K562 (cell line): ENCODE measurements at regions of chr17 and their contacts with region 1.

Region 1: DNA sequence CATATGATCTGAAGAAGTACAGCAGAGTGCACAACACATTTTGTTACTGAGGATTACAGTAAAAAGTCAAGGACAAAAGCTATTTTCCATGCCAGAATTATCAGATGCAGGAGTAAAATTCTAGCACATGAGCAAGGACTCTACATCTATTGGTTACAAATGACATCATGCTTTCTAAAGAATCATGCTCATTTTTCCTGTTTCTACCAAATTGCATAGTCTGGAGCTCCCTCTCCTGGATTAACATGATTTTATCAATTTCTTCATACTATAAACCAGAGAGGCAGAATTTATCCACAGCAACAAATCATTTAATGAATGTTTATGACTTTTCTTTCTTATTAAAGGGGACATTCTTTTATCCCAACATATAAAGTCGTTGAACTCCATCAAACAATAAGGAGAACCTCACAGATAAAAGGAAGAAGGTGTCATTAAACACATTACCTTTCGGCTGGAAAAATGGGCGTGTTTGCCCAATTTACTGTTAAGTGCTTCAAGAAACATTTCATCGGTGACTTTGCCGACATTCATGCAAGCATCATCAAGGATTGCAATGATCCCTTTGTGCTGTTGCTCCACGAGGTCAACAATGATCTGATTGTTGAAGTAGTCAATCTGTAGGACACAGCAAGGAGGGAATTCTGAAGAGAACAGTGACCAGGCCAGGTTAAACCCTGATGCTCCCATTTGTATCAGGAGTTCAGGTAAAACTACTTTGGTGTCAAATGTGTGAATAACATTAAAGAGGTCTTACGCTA is 121.7 kb downstream of the MYO1D start:
- DNase-seq: peak; percentile 41 to 54 (median 51)
- ATAC-seq: peak; percentile 90
- H3K4me3 ChIP-seq: no peak overlapping the region
- H3K27ac ChIP-seq: no peak overlapping the region
- H3K4me1 ChIP-seq: no peaks in the 10 kb centered on the region
- H3K27me3 ChIP-seq: no peaks in the 10 kb centered on the region
- CTCF ChIP-seq: peak; percentile 45 to 85 (median 48); a peak in 4 of 6 replicates
- EP300 ChIP-seq: no peak
- POLR2A ChIP-seq: no peak
- RAD21 ChIP-seq: peak; percentile 31 to 83; a peak in 3 of 4 replicates

Region 2: GRCh38 chr17:32222620-32223019 is 532.6 kb before region 1 on chr17:
- CTCF ChIA-PET with region 1: no interaction called
- POLR2A ChIA-PET with region 1: no interaction called
- in situ Hi-C with region 1: no loop called
- intact Hi-C with region 1: no loop called
- DNase-seq: no peak
- ATAC-seq: no peak
- H3K4me3 ChIP-seq: no peak overlapping the region
- H3K27ac ChIP-seq: no peak overlapping the region
- H3K4me1 ChIP-seq: no peaks in the 10 kb centered on the region
- H3K27me3 ChIP-seq: no peaks in the 10 kb centered on the region
- CTCF ChIP-seq: no peak
- EP300 ChIP-seq: no peak
- POLR2A ChIP-seq: no peak
- RAD21 ChIP-seq: no peak

Region 3: GRCh38 chr17:32461853-32462617 is 293.2 kb before region 1 on chr17:
- CTCF ChIA-PET with region 1: interaction called, 8 read pairs
- POLR2A ChIA-PET with region 1: no interaction called
- in situ Hi-C with region 1: loop called (anchors 5 kb)
- intact Hi-C with region 1: loop called (anchors 1 kb)
- DNase-seq: peak; percentile 40 to 72 (median 44)
- ATAC-seq: peak; percentile 92
- H3K4me3 ChIP-seq: no peak overlapping the region
- H3K27ac ChIP-seq: 0 out of 3 replicates have a peak overlapping the region, but pooled peaks have one; percentile 40
- H3K4me1 ChIP-seq: peaks cover 0 to 2% of the 10 kb centered on the region in 2 experiments; a peak in 1 of 5 replicates
- H3K27me3 ChIP-seq: no peaks in the 10 kb centered on the region
- CTCF ChIP-seq: peak; percentile 63 to 75 (median 70)
- EP300 ChIP-seq: no peak
- POLR2A ChIP-seq: no peak
- RAD21 ChIP-seq: peak in 1 of 2 experiments; percentile 31; a peak in 1 of 4 replicates

Region 4: DNA sequence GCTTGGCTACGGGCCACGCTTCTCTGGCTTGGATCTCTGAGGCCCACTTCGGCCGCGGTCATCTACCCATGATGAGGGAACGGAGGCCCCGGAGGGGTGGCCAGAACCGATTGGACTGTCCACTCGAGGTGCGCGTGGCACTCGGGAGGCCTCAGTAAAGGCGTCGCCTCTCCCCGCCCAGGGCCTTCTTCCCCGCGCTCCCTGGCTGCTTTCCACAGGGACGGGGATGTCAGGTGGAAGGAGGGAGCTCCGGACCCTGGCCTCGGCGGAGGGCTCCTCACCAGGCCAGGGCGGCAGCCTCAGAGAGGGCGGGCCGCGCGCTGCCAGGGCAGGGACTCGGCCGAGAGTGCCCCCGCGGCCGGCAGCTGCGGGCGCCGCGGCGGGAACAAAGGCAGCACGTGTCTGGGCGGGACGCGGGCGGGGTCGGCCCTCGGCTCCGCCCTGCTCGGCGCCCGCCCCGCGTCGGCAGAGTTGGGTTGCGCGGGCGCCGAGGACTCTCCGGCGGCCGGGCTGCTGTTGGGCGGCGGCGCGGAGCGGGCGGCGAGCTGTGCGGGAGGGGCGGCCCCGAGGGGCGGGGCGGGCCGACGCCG is 269.0 kb before region 1 on chr17:
- CTCF ChIA-PET with region 1: interaction called, 9 read pairs
- POLR2A ChIA-PET with region 1: interaction called, 3 read pairs
- in situ Hi-C with region 1: no loop called
- intact Hi-C with region 1: loop called (anchors 1 kb)
- DNase-seq: peak; percentile 88 to 94 (median 92)
- ATAC-seq: peak; percentile 90
- H3K4me3 ChIP-seq: peak overlapping the region; percentile 56
- H3K27ac ChIP-seq: peak overlapping the region; percentile 78
- H3K4me1 ChIP-seq: peaks cover 11 to 46% of the 10 kb centered on the region in 2 experiments; a peak in 4 of 5 replicates
- H3K27me3 ChIP-seq: no peaks in the 10 kb centered on the region
- CTCF ChIP-seq: peak in 1 of 3 experiments; percentile 0; a peak in 1 of 6 replicates
- EP300 ChIP-seq: no peak
- POLR2A ChIP-seq: peak; percentile 62
- RAD21 ChIP-seq: no peak

Region 5: GRCh38 chr17:32671896-32672295 is 83.3 kb before region 1 on chr17:
- CTCF ChIA-PET with region 1: no interaction called
- POLR2A ChIA-PET with region 1: no interaction called
- in situ Hi-C with region 1: no loop called
- intact Hi-C with region 1: loop called (anchors 1 kb)
- DNase-seq: no peak
- ATAC-seq: no peak
- H3K4me3 ChIP-seq: no peak overlapping the region
- H3K27ac ChIP-seq: no peak overlapping the region
- H3K4me1 ChIP-seq: no peaks in the 10 kb centered on the region; a peak in 1 of 5 replicates
- H3K27me3 ChIP-seq: no peaks in the 10 kb centered on the region
- CTCF ChIP-seq: no peak
- EP300 ChIP-seq: no peak
- POLR2A ChIP-seq: no peak
- RAD21 ChIP-seq: no peak